IMR-90 (cell line): ENCODE measurements at regions of chr4 and their contacts with region 1.

Region 1: DNA sequence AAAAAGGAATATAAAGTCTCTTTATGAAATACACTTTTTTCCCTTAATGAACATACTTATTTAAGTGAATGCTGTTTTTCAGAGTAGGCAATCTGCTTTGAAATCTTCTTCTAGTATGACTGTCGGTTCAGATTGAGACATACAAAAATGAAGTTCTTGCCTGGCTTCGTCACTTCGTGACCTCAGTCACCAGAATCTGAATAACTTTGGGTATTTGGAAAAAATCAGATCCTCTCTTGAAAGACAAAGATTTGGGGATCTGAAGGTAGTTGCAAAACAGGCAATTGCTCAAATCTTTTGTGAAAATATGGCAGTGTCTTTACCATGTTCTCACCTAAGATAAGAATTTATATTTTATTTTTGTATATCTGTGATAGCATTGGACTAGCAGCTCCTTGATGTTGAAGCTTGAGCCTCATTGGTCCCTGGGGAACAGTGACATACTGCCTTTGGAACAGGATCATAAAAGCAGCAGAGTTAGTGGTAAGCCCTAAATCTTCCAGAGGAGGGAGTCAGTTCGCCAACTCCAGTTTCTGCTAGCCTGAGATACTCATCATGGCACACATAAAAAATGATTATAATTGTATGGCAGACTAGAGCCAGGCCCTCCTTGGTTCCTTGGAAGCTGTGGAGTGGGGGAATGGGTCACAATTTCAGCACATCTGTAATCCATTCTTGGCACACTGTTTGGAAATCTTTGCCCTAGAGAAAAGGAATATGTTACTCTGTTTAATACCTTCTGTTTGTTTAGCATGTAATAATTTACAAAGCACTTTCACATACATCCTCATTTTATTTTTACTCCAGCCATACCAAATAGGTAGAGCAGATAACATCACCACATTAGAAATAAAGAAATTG is 5.0 kb downstream of the ARFIP1 start:
- DNase-seq: peak; percentile 40
- ATAC-seq: no peak
- H3K4me3 ChIP-seq: no peak overlapping the region
- H3K27ac ChIP-seq: no peak overlapping the region
- H3K4me1 ChIP-seq: no peaks in the 10 kb centered on the region
- H3K27me3 ChIP-seq: no peaks in the 10 kb centered on the region
- CTCF ChIP-seq: peak; percentile 18; the same call in 1 of the 2 replicates
- POLR2A ChIP-seq: no peak
- RAD21 ChIP-seq: no peak

Region 2: DNA sequence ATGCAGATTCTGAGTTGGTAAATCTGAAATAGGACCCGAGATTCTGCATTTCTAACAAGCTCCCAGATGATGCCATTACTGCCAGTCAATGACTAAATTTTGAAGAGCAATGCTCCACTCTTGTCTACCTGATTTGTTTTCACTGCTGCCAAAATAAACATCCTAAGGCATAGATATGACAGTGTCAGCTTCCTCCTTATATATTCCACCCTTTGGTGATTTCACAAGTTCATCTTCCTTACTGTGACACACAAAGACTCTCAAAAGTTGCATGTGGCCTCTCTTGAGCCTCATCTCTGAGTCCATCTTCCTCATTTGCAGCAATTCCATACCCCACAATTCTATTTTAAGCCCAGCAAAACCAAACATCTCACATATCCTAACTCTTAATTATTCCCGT is 359.7 kb before region 1 on chr4:
- CTCF ChIA-PET with region 1: interaction called, 11 read pairs
- POLR2A ChIA-PET with region 1: no interaction called
- dilution Hi-C with region 1: no loop called
- in situ Hi-C with region 1: no loop called
- intact Hi-C with region 1: no loop called
- DNase-seq: no peak
- ATAC-seq: no peak
- H3K4me3 ChIP-seq: no peak overlapping the region
- H3K27ac ChIP-seq: no peak overlapping the region
- H3K4me1 ChIP-seq: no peaks in the 10 kb centered on the region
- H3K27me3 ChIP-seq: no peaks in the 10 kb centered on the region
- CTCF ChIP-seq: no peak
- POLR2A ChIP-seq: no peak
- RAD21 ChIP-seq: no peak

Region 3: GRCh38 chr4:152618971-152619370 is 165.7 kb before region 1 on chr4:
- CTCF ChIA-PET with region 1: no interaction called
- POLR2A ChIA-PET with region 1: no interaction called
- dilution Hi-C with region 1: no loop called
- in situ Hi-C with region 1: no loop called
- intact Hi-C with region 1: no loop called
- DNase-seq: no peak
- ATAC-seq: no peak
- H3K4me3 ChIP-seq: no peak overlapping the region
- H3K27ac ChIP-seq: no peak overlapping the region
- H3K4me1 ChIP-seq: no peaks in the 10 kb centered on the region
- H3K27me3 ChIP-seq: peaks cover 40% of the 10 kb centered on the region
- CTCF ChIP-seq: no peak
- POLR2A ChIP-seq: no peak
- RAD21 ChIP-seq: no peak